B cell (primary cell): ENCODE measurements at regions of chr10 and their contacts with region 1.

Region 1: GRCh38 chr10:12241810-12242529 is 46.0 kb downstream of the CDC123 start:
- DNase-seq: peak; percentile 71
- ATAC-seq: no peak
- H3K4me3 ChIP-seq: no peak overlapping the region
- H3K4me3 Mint-ChIP-seq: peak overlapping the region; percentile 77
- H3K27ac ChIP-seq: peak overlapping the region; percentile 95
- H3K27ac Mint-ChIP-seq: peak overlapping the region; percentile 99
- H3K4me1 ChIP-seq: peaks cover 58 to 62% of the 10 kb centered on the region in 2 donors
- H3K4me1 Mint-ChIP-seq: peaks cover 60% of the 10 kb centered on the region
- H3K27me3 ChIP-seq: no peaks in the 10 kb centered on the region
- H3K27me3 Mint-ChIP-seq: no peaks in the 10 kb centered on the region
- CTCF ChIP-seq: no peak

Region 2: DNA sequence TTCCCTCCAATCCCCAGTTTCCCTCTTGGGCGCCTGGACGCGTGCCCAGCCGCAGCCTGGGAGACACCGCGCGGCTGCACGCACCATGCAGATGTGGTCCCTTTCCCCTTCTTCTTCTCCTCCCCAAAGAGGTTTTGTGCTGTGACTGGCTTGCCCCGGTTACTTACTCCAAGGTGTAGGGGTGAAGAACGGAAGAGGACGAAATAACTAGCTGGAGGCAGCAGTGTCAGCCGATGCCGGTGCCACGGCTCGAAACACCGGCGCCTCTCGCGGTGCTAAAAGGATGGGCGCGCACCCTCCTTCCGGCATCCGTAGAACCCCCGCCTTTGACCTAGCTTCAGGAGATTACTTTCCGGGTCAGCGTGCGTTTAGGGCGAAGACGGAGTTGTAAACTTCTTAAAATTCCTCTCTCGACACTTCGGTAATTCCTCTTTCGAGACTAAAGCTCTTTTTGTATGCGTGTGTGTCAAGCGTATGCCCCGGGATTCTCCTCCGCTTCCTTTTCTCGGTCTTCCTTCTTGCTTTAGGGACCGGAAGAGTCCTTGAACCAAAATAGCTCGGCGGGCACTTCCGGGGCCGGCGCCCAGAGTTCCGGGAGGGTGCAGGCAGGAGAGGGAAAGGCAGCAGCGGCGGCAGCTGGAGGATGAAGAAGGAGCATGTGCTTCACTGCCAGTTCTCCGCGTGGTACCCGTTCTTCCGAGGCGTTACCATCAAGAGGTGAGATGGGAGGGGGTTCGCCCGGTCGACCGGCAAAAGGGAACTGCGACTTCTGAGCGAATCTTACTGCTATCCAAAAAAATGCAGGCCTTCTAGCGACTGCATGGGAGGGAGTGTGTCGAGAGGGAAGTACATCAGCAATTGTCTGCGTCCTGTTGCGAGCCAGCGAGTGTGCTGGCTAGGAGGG is 46.1 kb before region 1 on chr10 and contains the starts of genes CDC123 and NUDT5:
- CTCF ChIA-PET with region 1: interaction called, 5 read pairs
- POLR2A ChIA-PET with region 1: no interaction called
- intact Hi-C with region 1: loop called (anchors 2 kb)
- DNase-seq: peak; percentile 93
- ATAC-seq: peak; percentile 90
- H3K4me3 ChIP-seq: peak within 1 kb of the TSS; percentile 87 to 97 (median 95)
- H3K4me3 Mint-ChIP-seq: peak within 1 kb of the TSS; percentile 93
- H3K27ac ChIP-seq: peak within 1 kb of the TSS; percentile 91 to 94
- H3K27ac Mint-ChIP-seq: peak within 1 kb of the TSS; percentile 99
- H3K4me1 ChIP-seq: peaks cover 18 to 24% of the 10 kb centered on the region in 2 donors
- H3K4me1 Mint-ChIP-seq: peaks cover 42% of the 10 kb centered on the region
- H3K27me3 ChIP-seq: no peaks in the 10 kb centered on the region
- H3K27me3 Mint-ChIP-seq: no peaks in the 10 kb centered on the region
- CTCF ChIP-seq: no peak
- total RNA-seq, gene CDC123: 56.0 and 62.0 TPM in 2 replicates
- total RNA-seq, gene NUDT5: 39.1 and 39.9 TPM in 2 replicates

Region 3: GRCh38 chr10:12372846-12373245 is 130.9 kb after region 1 on chr10:
- CTCF ChIA-PET with region 1: no interaction called
- POLR2A ChIA-PET with region 1: no interaction called
- intact Hi-C with region 1: no loop called
- DNase-seq: no peak
- ATAC-seq: no peak
- H3K4me3 ChIP-seq: no peak overlapping the region
- H3K4me3 Mint-ChIP-seq: no peak overlapping the region
- H3K27ac ChIP-seq: no peak overlapping the region
- H3K27ac Mint-ChIP-seq: no peak overlapping the region
- H3K4me1 ChIP-seq: peaks cover 0 to 3% of the 10 kb centered on the region in 2 donors
- H3K4me1 Mint-ChIP-seq: peaks cover 37% of the 10 kb centered on the region
- H3K27me3 ChIP-seq: no peaks in the 10 kb centered on the region
- H3K27me3 Mint-ChIP-seq: no peaks in the 10 kb centered on the region
- CTCF ChIP-seq: no peak